GM10248 (cell line): ENCODE measurements at regions of chr1 and their contacts with region 1.

Region 1: GRCh38 chr1:2391041-2391930 is at the starts of genes MORN1 and RER1:
- DNase-seq: peak; percentile 99
- CTCF ChIP-seq: no peak

Region 2: DNA sequence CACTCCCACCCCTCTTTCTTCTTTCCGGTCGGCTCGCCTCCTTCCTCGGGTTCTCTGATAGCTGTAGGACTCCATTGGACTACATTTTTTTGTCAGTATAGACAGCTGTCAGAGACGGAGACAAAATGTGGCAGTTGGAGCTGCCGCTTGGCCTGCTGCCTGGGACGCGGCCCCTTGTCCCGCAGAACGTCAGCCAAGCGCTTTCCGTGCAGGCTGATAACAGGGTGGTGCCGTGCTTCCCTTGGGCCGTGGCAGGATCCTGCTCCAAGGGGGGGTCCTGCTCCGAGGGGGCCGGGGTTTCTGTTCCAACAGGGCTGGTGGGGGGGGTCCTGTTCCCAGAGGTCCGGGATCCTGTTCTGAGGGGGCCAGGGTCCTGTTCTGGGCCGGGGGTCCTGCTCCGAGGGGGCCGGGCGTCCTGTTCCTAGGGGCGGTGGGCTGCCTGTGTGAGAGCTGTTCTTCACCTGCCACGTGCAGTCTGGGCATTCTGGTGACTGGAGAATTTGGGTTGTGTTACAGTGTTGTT is 158.3 kb before region 1 on chr1:
- CTCF ChIA-PET with region 1: no interaction called
- POLR2A ChIA-PET with region 1: interaction called, 10 read pairs
- DNase-seq: no peak
- CTCF ChIP-seq: no peak